ENCODE measurements at regions of chr13 and their contacts with region 1.

Region 1: GRCh38 chr13:73708393-73708985 is 425.7 kb downstream of the KLF12 start:
- DNase-seq: peak; percentile 47
- H3K4me3 Mint-ChIP-seq: no peak overlapping the region
- H3K27ac Mint-ChIP-seq: no peak overlapping the region
- H3K4me1 Mint-ChIP-seq: peaks cover 8% of the 10 kb centered on the region
- H3K27me3 Mint-ChIP-seq: no peaks in the 10 kb centered on the region

Region 2: DNA sequence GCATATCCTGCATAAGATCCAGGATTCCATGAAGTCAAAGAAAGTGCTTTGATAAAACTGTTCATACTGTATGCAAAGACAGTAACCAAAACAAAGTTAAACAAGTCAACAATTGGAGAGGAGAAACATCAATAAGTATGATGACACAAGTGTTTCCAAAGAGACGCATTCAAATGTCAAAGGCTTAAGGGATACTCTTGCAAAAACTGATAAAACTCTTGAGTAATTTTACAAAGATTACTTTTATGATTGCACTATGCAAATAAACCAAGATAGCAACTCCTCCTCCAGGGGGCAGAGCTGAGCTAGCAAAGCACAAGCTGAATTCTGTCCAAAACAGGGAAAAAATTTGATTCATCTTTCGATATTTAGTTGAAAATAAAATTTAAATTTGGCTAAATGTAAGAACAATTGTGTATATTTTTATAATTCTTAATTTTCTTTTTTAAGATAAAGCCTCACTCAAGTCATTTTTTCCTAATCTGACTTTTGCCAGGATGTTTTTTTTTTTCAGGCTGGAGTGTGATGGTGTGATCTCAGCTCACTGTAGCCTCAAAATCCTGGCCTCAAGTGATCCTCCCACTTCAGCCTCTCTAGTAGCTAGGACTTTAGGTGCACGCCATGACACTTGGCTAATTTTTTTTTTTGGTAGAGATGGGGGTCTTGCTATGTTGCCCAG is 1065.0 kb before region 1 on chr13:
- intact Hi-C with region 1: loop called (anchors 1 kb)
- DNase-seq: peak; percentile 8
- H3K4me3 Mint-ChIP-seq: no peak overlapping the region
- H3K27ac Mint-ChIP-seq: no peak overlapping the region
- H3K4me1 Mint-ChIP-seq: no peaks in the 10 kb centered on the region
- H3K27me3 Mint-ChIP-seq: no peaks in the 10 kb centered on the region

Region 3: GRCh38 chr13:72808917-72809500 is 899.5 kb before region 1 on chr13:
- intact Hi-C with region 1: loop called (anchors 1 kb)
- DNase-seq: no peak
- H3K4me3 Mint-ChIP-seq: no peak overlapping the region
- H3K27ac Mint-ChIP-seq: no peak overlapping the region
- H3K4me1 Mint-ChIP-seq: no peaks in the 10 kb centered on the region
- H3K27me3 Mint-ChIP-seq: no peaks in the 10 kb centered on the region

Region 4: GRCh38 chr13:72839831-72840426 is 868.6 kb before region 1 on chr13:
- intact Hi-C with region 1: loop called (anchors 1 kb)
- DNase-seq: peak; percentile 5
- H3K4me3 Mint-ChIP-seq: no peak overlapping the region
- H3K27ac Mint-ChIP-seq: no peak overlapping the region
- H3K4me1 Mint-ChIP-seq: no peaks in the 10 kb centered on the region
- H3K27me3 Mint-ChIP-seq: no peaks in the 10 kb centered on the region

Region 5: GRCh38 chr13:73058736-73059459 is 649.6 kb before region 1 on chr13 and contains the start of gene KLF5:
- intact Hi-C with region 1: loop called (anchors 2 kb)
- DNase-seq: peak; percentile 97
- H3K4me3 Mint-ChIP-seq: peak within 1 kb of the TSS; percentile 82
- H3K27ac Mint-ChIP-seq: peak within 1 kb of the TSS; percentile 74
- H3K4me1 Mint-ChIP-seq: peaks cover 20% of the 10 kb centered on the region
- H3K27me3 Mint-ChIP-seq: peaks cover 51% of the 10 kb centered on the region
- total RNA-seq, gene KLF5: 2.4 and 2.5 TPM in 2 replicates

Region 6: GRCh38 chr13:73228546-73228945 is 479.9 kb before region 1 on chr13:
- intact Hi-C with region 1: loop called (anchors 1 kb)
- DNase-seq: peak; percentile 8
- H3K4me3 Mint-ChIP-seq: no peak overlapping the region
- H3K27ac Mint-ChIP-seq: peak overlapping the region; percentile 1
- H3K4me1 Mint-ChIP-seq: peaks cover 30% of the 10 kb centered on the region
- H3K27me3 Mint-ChIP-seq: peaks cover 2% of the 10 kb centered on the region

Region 7: GRCh38 chr13:73417015-73417623 is 291.4 kb before region 1 on chr13:
- intact Hi-C with region 1: loop called (anchors 10 kb)
- DNase-seq: no peak
- H3K4me3 Mint-ChIP-seq: no peak overlapping the region
- H3K27ac Mint-ChIP-seq: no peak overlapping the region
- H3K4me1 Mint-ChIP-seq: no peaks in the 10 kb centered on the region
- H3K27me3 Mint-ChIP-seq: no peaks in the 10 kb centered on the region

Measured in activated T-helper 1 cell treated with anti-CD3 and anti-CD28 coated beads, Interleukin-12 subunit alpha, Interleukin-12 subunit beta, Interleukin-2, Interleukin-4 antibody, amounts not matched to agents 30 ng/mL and 10 ng/mL and 1 ng/mL, durations not matched to agents 14 hours and 24 hours and 36 hours (primary cell).